Calu3 (cell line): ENCODE measurements at regions of chr18 and their contacts with region 1.

Region 1: GRCh38 chr18:4232656-4233055 is 222.5 kb downstream of the DLGAP1 start:
- DNase-seq: no peak
- H3K4me3 Mint-ChIP-seq: no peak overlapping the region
- H3K27ac Mint-ChIP-seq: no peak overlapping the region
- H3K4me1 Mint-ChIP-seq: no peaks in the 10 kb centered on the region
- H3K27me3 Mint-ChIP-seq: no peaks in the 10 kb centered on the region
- CTCF ChIP-seq: no peak

Region 2: GRCh38 chr18:3447895-3448837 is 784.5 kb before region 1 on chr18:
- CTCF ChIA-PET with region 1: no interaction called
- intact Hi-C with region 1: no loop called
- DNase-seq: peak; percentile 97
- H3K4me3 Mint-ChIP-seq: peak overlapping the region; percentile 92
- H3K27ac Mint-ChIP-seq: peak overlapping the region; percentile 95
- H3K4me1 Mint-ChIP-seq: peaks cover 7% of the 10 kb centered on the region
- H3K27me3 Mint-ChIP-seq: no peaks in the 10 kb centered on the region
- CTCF ChIP-seq: no peak

Region 3: DNA sequence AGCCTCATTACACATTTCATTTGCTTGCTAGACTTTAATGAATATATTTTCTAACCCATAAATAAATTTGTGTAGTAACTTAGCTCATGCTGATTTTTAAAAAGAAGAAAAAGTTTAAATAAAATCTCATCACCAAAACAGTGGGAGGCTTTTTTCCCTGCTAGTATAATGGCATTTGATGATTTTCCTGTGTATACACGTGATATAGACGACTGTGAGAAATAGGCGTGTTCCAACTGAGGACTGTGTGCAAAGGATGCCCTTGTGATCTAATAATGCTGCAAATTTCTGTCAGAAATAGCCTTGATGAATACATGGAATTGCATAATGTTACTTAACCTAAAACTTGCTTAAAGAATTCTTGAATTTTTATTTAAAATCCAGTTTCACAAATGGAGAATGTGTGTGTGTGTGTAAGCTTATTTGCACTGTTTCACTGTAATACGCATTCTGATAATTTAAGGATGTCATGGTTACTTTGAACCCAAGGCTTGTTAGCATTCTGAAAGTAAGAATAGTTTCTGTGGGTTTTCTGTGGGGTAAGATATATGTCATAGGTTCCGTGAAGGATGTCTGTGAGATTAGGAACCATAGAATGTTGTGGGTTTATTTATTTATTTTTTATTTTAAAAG is 44.4 kb after region 1 on chr18:
- CTCF ChIA-PET with region 1: no interaction called
- intact Hi-C with region 1: loop called (anchors 5 kb)
- DNase-seq: no peak
- H3K4me3 Mint-ChIP-seq: no peak overlapping the region
- H3K27ac Mint-ChIP-seq: no peak overlapping the region
- H3K4me1 Mint-ChIP-seq: no peaks in the 10 kb centered on the region
- H3K27me3 Mint-ChIP-seq: no peaks in the 10 kb centered on the region
- CTCF ChIP-seq: no peak